ENCODE measurements at regions of chr1 and their contacts with region 1.

Region 1: DNA sequence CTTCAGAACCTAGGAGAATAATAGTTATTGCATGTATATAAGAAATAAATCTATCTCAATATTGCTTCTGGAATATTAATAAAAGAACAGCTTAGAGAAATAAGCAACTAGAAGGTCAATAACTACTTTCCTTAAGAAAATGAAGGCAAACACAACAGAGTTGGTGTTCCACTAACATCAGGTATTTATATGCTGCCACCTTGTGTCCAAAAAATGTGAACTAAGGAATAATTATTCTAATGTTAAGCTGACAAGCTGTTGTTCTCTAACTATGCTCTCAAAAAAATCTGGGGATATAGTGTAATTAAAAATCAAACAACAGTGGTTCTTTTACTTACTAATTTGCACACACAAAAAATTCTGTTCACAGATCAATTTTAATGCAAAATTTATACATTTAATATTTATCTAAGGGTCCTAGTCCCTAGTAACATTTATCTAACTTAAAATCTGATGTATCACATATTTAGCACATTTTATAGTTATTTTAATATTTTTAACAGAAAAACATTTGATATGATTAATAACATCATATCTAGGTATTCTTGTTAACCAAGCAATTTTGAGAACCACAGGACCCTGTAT is 39.6 kb downstream of the UCHL5 start:
- DNase-seq: peak in 2 of 5 donors; percentile 75 to 81
- H3K4me3 ChIP-seq: no peak overlapping the region
- H3K27ac ChIP-seq: no peak overlapping the region
- H3K4me1 ChIP-seq: no peaks in the 10 kb centered on the region
- H3K27me3 ChIP-seq: no peaks in the 10 kb centered on the region
- CTCF ChIP-seq: peak; percentile 57

Region 2: DNA sequence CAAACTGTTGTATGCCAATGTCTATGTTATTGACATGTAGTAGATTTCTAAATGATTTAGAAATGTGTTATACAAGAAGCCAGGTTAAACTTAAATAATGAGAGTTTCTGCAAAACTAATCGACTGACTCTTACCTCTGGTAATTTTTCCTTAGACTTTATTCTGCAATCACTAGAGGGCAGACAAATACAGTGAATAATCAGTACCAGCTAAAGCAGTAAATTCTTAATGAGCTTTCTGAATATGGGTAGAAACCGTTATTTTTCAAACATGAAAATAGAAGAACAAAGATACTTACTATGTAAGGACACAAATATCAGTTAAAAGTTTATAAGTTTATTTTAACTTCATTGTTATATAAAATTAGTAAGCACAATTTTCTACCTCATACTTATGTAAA is 541.9 kb before region 1 on chr1:
- intact Hi-C with region 1: loop called (anchors 10 kb)
- DNase-seq: peak in 2 of 5 donors; percentile 34 to 56
- H3K4me3 ChIP-seq: no peak overlapping the region
- H3K27ac ChIP-seq: no peak overlapping the region
- H3K4me1 ChIP-seq: no peaks in the 10 kb centered on the region
- H3K27me3 ChIP-seq: no peaks in the 10 kb centered on the region
- CTCF ChIP-seq: peak; percentile 52

Region 3: GRCh38 chr1:192808518-192809306 is 210.8 kb before region 1 on chr1 and contains the start of gene RGS2:
- intact Hi-C with region 1: loop called (anchors 10 kb)
- DNase-seq: peak; percentile 94 to 97 (median 97)
- H3K4me3 ChIP-seq: peak within 1 kb of the TSS; percentile 85 to 98 (median 92)
- H3K27ac ChIP-seq: peak within 1 kb of the TSS; percentile 64 to 91
- H3K4me1 ChIP-seq: peaks cover 0 to 7% (median 0%) of the 10 kb centered on the region in 3 donors
- H3K27me3 ChIP-seq: no peaks in the 10 kb centered on the region
- CTCF ChIP-seq: peak; percentile 1
- total RNA-seq, gene RGS2: 51.2 TPM

Region 4: GRCh38 chr1:192852001-192852947 is 167.3 kb before region 1 on chr1:
- intact Hi-C with region 1: no loop called
- DNase-seq: no peak
- H3K4me3 ChIP-seq: no peak overlapping the region
- H3K27ac ChIP-seq: no peak overlapping the region
- H3K4me1 ChIP-seq: no peaks in the 10 kb centered on the region
- H3K27me3 ChIP-seq: no peaks in the 10 kb centered on the region
- CTCF ChIP-seq: no peak

Measured in kidney (tissue), 22 donors.